ENCODE measurements at regions of chr7 and their contacts with region 1.

Region 1: GRCh38 chr7:128209229-128210035 is 31.6 kb upstream of the LEP start:
- DNase-seq: peak; percentile 67 to 88 (median 78)
- ATAC-seq: peak; percentile 99
- H3K4me3 ChIP-seq: no peak overlapping the region
- H3K27ac ChIP-seq: no peak overlapping the region
- H3K4me1 ChIP-seq: peaks cover 0 to 6% of the 10 kb centered on the region in 2 donors
- H3K27me3 ChIP-seq: peaks cover 0 to 58% of the 10 kb centered on the region in 2 donors
- CTCF ChIP-seq: peak; percentile 96 to 97

Region 2: DNA sequence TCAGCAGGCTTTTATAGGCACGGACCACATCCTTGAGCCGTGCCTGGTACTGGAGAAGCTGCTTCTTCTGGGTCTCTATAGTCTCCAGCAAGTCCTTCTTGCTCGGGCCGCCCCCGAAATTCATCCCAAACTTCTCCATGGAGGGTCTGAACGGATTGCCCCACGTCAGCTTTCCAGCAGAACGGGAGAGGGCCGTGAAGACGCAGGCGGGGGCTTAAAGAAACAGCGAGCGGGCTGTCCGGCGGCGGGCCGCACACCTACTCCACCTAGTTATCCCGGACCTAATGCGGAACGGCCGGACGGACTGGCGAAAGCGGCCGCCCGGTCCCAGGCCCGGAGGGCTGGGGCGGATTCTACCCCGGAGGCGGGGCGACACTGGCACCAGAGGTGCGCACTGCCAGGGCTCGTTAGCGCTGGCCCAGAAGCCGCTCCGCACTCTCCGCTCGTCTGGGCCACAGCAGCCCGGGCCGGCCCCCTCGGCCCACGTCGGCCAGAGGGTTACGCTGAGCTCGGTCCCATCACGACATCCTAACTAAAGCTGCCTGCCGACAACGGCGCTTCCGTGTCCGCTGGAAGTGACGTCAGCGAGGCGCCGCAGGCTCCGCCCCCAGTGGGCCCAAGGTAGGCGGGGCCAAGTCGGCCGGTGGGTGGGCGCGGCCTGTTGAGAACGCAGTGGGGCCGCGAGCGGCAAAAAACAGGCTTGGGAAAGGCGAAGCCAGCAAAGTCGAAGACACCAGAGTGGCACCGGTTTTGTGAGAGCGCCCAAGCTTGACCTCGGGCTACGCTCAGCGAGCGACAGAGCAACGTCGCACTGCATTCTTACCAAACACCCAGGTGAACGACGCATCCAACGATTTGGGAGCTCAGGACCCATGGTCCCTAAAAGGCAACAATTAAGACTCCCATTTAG is 624.1 kb before region 1 on chr7 and contains the start of gene GCC1:
- intact Hi-C with region 1: no loop called
- DNase-seq: peak; percentile 89 to 98 (median 94)
- ATAC-seq: peak; percentile 86
- H3K4me3 ChIP-seq: peak within 1 kb of the TSS; percentile 85 to 88
- H3K27ac ChIP-seq: peak within 1 kb of the TSS; percentile 82 to 91
- H3K4me1 ChIP-seq: peaks cover 28 to 72% of the 10 kb centered on the region in 2 donors
- H3K27me3 ChIP-seq: no peaks in the 10 kb centered on the region
- CTCF ChIP-seq: no peak
- polyA plus RNA-seq, gene GCC1: 11.1 to 14.9 (median 12.3) TPM

Region 3: DNA sequence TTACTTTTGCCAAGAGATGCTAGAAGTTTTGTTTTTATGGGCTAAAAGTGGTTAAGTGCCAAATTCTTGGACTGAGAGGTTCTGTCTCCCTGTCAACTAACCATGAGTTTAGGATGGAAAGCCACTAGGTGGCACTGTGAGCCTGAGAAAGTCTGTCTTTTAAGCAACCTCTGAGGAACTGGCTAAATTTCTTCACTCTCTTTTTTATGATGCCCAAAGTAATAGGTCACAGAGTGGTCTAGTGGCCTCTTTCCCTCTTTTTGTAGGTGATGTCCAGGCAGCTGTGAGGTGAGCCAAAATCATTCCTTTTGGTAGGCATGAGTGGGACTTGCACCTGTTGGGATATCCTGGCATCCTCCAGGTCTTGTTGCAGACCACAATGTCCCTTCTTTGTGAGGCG is 500.6 kb before region 1 on chr7:
- intact Hi-C with region 1: loop called (anchors 5 to 10 kb)
- DNase-seq: peak in 3 of 4 donors; percentile 55 to 86 (median 64)
- ATAC-seq: peak; percentile 89
- H3K4me3 ChIP-seq: no peak overlapping the region
- H3K27ac ChIP-seq: no peak overlapping the region
- H3K4me1 ChIP-seq: no peaks in the 10 kb centered on the region
- H3K27me3 ChIP-seq: no peaks in the 10 kb centered on the region
- CTCF ChIP-seq: peak; percentile 73 to 79

Region 4: DNA sequence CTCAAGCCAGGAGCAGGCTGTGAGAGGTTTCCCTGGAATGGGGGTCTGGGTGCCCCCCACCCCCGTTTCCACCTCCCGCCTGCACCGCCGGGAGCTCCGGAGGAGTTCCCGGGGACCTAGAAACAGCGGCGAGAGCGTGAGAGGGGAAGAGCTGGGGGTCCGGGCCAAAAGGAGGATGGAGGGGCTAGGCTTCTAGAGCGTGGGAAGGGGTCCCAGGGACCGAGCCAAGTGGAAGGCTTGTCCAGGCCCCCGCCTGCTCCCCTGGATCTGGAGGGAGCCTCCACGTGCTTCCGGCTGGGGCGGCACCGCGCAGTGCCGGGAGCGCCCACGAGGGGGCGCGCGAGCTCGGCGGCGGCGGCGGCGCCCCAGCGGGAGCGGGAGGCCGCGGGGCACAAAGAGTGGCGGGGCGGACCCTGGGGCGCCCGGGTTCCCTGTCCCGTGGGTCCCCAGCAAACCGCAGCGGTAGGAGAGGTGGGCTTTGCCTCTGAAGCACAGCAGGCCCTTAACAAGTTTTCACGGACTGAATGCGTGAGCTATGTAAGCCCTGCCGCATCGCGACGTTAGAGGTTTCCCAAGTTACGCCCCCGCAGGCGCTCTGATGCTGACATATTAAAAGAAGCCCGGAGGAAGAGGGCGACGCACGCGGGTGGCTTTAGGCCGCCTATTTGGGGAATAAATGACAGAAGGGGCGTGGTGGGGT is 73.8 kb before region 1 on chr7:
- intact Hi-C with region 1: loop called in 1 of 2 experiments (anchors 5 kb)
- DNase-seq: peak in 3 of 4 donors; percentile 40 to 93 (median 56)
- ATAC-seq: peak; percentile 98
- H3K4me3 ChIP-seq: peak overlapping the region; percentile 24 to 49
- H3K27ac ChIP-seq: no peak overlapping the region
- H3K4me1 ChIP-seq: peaks cover 3 to 21% of the 10 kb centered on the region in 2 donors
- H3K27me3 ChIP-seq: peaks cover 32 to 69% of the 10 kb centered on the region in 2 donors
- CTCF ChIP-seq: peak; percentile 94 to 98